ENCODE measurements at regions of chr3 and their contacts with region 1.

Region 1: DNA sequence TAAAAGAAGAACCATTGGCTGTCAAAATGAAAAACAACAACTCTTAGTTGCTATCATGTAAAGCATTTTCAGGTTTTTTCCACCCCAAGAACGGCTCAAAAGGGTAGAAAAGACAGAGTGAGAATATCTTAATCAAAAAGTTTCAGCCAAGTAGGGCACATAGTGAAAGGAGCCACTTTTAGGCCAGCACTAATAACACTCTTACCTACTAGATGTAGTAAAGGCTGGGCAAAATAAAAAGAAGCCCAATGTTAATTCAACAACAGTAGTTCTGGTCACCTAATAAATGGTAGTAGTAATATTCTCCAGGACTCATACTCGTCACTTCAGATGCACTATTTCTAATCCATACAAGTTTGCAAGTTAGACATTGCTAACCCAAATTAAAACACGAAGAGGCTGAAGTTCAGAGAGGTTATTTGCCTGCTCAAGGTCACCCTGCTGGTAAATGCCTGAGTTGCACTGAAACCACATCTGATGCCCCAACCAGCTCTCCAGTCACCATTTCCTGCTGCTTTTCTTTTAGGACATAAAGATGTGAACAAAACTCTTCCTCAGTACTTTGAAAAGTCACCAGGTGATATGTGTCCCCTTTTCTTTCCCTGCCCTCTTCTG is 7.5 kb downstream of the GOLIM4 start:
- DNase-seq: peak; percentile 35
- ATAC-seq: peak; percentile 75
- H3K4me3 ChIP-seq: peak overlapping the region; percentile 41; the same call in 1 of the 2 replicates
- H3K27ac ChIP-seq: peak overlapping the region; percentile 5
- H3K4me1 ChIP-seq: peaks cover 21% of the 10 kb centered on the region
- H3K27me3 ChIP-seq: no peaks in the 10 kb centered on the region
- CTCF ChIP-seq: peak; percentile 23 to 59 (median 59); a peak in 5 of 6 replicates
- EP300 ChIP-seq: no peak
- POLR2A ChIP-seq: no peak
- RAD21 ChIP-seq: peak; percentile 26; the same call in 1 of the 2 replicates

Region 2: DNA sequence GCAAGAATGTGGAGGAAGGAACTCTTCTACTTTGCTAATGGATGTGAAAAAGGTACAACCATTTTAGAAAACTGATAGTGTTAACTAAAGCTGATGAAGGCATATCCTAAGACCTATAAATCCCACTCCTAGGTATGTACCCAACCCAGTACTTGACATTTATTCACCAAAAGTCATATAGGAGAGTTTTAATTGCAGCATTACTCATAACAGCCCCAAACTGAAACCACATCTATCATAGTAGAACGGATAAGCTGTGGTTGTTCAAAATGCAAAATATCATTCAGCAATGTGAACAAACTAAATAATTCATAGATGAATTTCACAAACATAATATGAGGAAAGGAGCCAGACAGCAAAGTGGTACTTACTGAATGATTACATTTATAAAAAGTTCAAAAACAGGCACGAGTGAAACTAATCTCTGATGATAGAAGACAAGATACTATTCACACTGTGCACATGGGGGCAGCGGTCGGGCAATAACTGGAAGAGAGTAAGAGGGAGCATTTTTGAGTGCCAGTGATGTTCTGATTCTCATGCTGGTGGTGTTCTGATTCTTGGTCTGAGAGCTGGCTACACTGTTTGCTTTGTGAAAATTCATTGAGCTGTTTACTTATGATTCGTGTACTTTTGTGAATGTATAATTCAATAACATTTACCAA is 26.7 kb before region 1 on chr3:
- CTCF ChIA-PET with region 1: interaction called, 35 read pairs
- POLR2A ChIA-PET with region 1: interaction called, 8 read pairs
- RAD21 ChIA-PET with region 1: interaction called, 8 read pairs
- SMC1A ChIA-PET with region 1: interaction called, 67 read pairs
- in situ Hi-C with region 1: no loop called
- intact Hi-C with region 1: loop called (anchors 2 kb)
- DNase-seq: no peak
- ATAC-seq: peak; percentile 96
- H3K4me3 ChIP-seq: peak overlapping the region; percentile 42; the same call in 1 of the 2 replicates
- H3K27ac ChIP-seq: no peak overlapping the region
- H3K4me1 ChIP-seq: peaks cover 10% of the 10 kb centered on the region
- H3K27me3 ChIP-seq: no peaks in the 10 kb centered on the region
- CTCF ChIP-seq: no peak
- EP300 ChIP-seq: peak in 1 of 2 experiments; percentile 48; a peak in 1 of 4 replicates
- POLR2A ChIP-seq: no peak
- RAD21 ChIP-seq: 0 out of 2 replicates have a peak, but pooled peaks have one; percentile 2

Region 3: DNA sequence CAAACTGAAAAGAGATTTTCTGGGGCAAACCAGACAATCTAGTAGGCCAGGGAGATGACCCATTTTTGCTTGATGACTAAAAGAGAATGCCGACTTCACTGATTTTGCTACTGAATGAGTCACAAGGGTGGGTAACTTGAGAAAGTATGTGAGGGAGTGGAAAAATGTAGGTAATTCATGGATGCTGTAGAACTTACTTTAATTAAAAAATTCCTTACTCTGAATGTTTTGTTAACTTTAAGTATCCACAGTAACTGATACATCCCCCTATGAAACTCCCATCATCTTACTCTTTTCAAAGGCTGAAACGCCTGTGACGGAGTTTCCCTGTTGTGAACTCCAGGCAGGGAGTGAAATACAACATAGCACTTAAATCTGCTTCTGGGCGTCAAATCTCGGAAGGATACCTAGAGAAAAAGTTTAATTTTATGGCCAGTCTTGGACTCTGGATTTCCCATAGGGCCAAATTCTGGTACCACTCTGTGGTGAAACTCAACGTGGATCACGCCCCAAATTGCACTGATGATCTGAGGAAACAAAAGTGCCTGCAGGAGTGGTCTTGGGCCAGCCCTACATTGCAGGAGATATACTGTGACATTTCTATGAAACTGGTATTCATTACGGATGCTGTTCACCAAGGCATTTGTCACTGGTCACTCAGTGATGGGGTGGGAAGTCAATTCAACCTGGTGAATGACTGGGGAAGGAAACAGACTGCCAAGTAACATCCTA is 16.5 kb before region 1 on chr3:
- CTCF ChIA-PET with region 1: interaction called, 5 read pairs
- POLR2A ChIA-PET with region 1: interaction called, 3 read pairs
- RAD21 ChIA-PET with region 1: no interaction called
- SMC1A ChIA-PET with region 1: interaction called, 15 read pairs
- in situ Hi-C with region 1: no loop called
- intact Hi-C with region 1: loop called (anchors 2 kb)
- DNase-seq: no peak
- ATAC-seq: no peak
- H3K4me3 ChIP-seq: no peak overlapping the region
- H3K27ac ChIP-seq: no peak overlapping the region
- H3K4me1 ChIP-seq: no peaks in the 10 kb centered on the region
- H3K27me3 ChIP-seq: no peaks in the 10 kb centered on the region
- CTCF ChIP-seq: no peak
- EP300 ChIP-seq: no peak
- POLR2A ChIP-seq: no peak
- RAD21 ChIP-seq: no peak

Region 4: GRCh38 chr3:168100777-168101492 is 12.7 kb after region 1 on chr3:
- CTCF ChIA-PET with region 1: interaction called, 9 read pairs
- POLR2A ChIA-PET with region 1: no interaction called
- RAD21 ChIA-PET with region 1: interaction called, 3 read pairs
- SMC1A ChIA-PET with region 1: interaction called, 10 read pairs
- in situ Hi-C with region 1: no loop called
- intact Hi-C with region 1: loop called (anchors 1 kb)
- DNase-seq: no peak
- ATAC-seq: no peak
- H3K4me3 ChIP-seq: no peak overlapping the region
- H3K27ac ChIP-seq: no peak overlapping the region
- H3K4me1 ChIP-seq: no peaks in the 10 kb centered on the region
- H3K27me3 ChIP-seq: no peaks in the 10 kb centered on the region
- CTCF ChIP-seq: no peak
- EP300 ChIP-seq: no peak
- POLR2A ChIP-seq: no peak
- RAD21 ChIP-seq: no peak